Activated B cell treated with CpG ODN at 0.5 μM for 24 hours (primary cell): ENCODE measurements at regions of chr2 and their contacts with region 1.

Region 1: DNA sequence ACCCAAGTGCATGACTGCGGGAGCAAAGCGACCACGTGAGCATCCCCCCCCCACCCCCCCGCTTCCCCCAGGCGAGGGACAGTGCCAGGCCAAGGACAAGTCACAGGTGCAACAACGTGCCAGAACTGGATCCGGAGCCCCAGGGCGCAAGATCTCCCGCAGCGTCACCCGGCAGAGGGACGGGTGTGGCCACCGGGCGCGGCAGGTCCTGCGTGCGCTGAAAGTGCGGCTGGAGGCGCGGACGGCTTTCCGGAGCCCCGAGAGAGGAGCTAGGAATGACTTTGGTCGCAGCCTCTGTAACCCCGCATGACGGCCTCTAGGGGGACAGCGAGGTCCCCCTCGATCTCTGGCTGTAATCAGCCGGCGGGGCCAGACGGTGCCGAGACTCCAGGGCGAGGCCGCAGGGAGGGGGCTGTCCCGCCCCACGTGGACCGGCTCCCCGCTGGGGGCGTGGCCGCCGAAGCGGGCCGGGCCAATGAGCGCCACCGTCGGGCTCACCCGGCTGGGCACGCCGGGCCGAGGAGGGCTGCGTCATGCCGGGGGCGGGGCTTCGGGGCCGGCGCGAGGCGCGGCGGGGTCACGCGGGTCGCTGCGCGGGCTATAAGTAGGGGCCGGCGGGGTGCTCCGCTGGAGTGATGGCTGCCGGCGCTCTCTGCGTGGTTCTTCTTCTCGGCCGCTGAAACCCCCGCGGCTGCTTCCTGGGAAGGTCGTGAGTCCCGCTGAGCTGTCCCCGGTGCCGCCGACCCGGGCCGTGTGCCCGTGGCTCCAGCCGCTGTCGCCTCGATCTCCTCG is at the start of gene SLC20A1:
- DNase-seq: peak; percentile 100
- ATAC-seq: peak; percentile 93
- H3K4me3 Mint-ChIP-seq: peak within 1 kb of the TSS; percentile 89
- H3K27ac Mint-ChIP-seq: peak within 1 kb of the TSS; percentile 88
- H3K4me1 Mint-ChIP-seq: peaks cover 36% of the 10 kb centered on the region
- H3K27me3 Mint-ChIP-seq: no peaks in the 10 kb centered on the region
- CTCF ChIP-seq: no peak
- total RNA-seq, gene SLC20A1: 46.9 and 54.6 TPM in 2 replicates

Region 2: DNA sequence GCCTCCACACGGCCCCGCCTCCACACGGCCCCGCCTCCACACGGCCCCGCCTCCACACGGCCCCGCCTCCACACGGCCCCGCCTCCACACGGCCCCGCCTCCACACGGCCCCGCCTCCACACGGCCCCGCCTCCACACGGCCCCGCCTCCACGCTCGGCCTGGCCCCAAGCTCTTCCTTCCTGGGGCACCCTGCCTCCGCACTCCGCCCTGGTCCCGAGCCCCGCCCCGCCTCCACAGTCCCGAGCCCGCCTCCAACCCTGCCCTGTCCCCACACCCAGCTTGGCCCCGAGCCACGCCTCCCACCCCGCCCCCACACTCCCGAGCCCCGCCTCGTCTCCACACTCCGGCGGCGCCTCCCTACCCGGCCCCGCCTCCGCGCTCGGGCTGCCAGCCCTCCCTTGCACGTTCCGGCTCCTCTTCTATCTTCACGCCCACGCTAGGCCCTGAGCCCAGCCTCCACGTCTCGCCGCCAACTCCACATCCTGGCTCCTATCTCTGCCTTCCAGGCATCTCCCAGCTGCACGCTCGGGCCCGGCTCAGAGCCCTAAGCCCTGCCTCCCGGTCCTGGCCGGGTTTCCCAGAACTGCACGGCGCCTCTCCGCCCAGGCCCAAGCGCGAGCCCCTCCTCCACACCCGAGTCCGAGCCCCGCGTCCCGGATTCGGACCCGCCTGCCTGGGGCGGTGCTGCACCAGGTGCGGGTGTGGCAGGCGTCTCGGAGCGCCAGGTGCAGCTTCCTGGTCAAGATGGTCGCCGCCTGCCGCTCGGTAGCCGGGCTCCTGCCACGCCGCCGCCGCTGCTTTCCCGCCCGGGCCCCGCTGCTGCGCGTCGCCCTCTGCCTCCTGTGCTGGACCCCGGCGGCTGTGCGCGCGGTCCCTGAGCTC is 590.4 kb before region 1 on chr2 and contains the start of gene TMEM87B:
- CTCF ChIA-PET with region 1: no interaction called
- POLR2A ChIA-PET with region 1: no interaction called
- intact Hi-C with region 1: loop called (anchors 1 kb)
- DNase-seq: peak; percentile 87
- ATAC-seq: peak; percentile 72
- H3K4me3 Mint-ChIP-seq: peak within 1 kb of the TSS; percentile 96
- H3K27ac Mint-ChIP-seq: peak within 1 kb of the TSS; percentile 97
- H3K4me1 Mint-ChIP-seq: peaks cover 39% of the 10 kb centered on the region
- H3K27me3 Mint-ChIP-seq: no peaks in the 10 kb centered on the region
- CTCF ChIP-seq: no peak
- total RNA-seq, gene TMEM87B: 19.8 and 20.0 TPM in 2 replicates

Region 3: GRCh38 chr2:112481050-112481527 is 164.4 kb before region 1 on chr2:
- CTCF ChIA-PET with region 1: no interaction called
- POLR2A ChIA-PET with region 1: no interaction called
- intact Hi-C with region 1: loop called (anchors 5 kb)
- DNase-seq: peak; percentile 71
- ATAC-seq: peak; percentile 73
- H3K4me3 Mint-ChIP-seq: peak overlapping the region; percentile 98
- H3K27ac Mint-ChIP-seq: peak overlapping the region; percentile 97
- H3K4me1 Mint-ChIP-seq: peaks cover 22% of the 10 kb centered on the region
- H3K27me3 Mint-ChIP-seq: no peaks in the 10 kb centered on the region
- CTCF ChIP-seq: no peak

Region 4: GRCh38 chr2:112584134-112584890 is 61.2 kb before region 1 on chr2 and contains the start of gene CHCHD5:
- CTCF ChIA-PET with region 1: no interaction called
- POLR2A ChIA-PET with region 1: interaction called, 16 read pairs
- intact Hi-C with region 1: loop called (anchors 5 kb)
- DNase-seq: peak; percentile 84
- ATAC-seq: peak; percentile 85
- H3K4me3 Mint-ChIP-seq: peak within 1 kb of the TSS; percentile 96
- H3K27ac Mint-ChIP-seq: peak within 1 kb of the TSS; percentile 96
- H3K4me1 Mint-ChIP-seq: peaks cover 35% of the 10 kb centered on the region
- H3K27me3 Mint-ChIP-seq: no peaks in the 10 kb centered on the region
- CTCF ChIP-seq: no peak
- total RNA-seq, gene CHCHD5: 26.0 and 28.4 TPM in 2 replicates

Region 5: DNA sequence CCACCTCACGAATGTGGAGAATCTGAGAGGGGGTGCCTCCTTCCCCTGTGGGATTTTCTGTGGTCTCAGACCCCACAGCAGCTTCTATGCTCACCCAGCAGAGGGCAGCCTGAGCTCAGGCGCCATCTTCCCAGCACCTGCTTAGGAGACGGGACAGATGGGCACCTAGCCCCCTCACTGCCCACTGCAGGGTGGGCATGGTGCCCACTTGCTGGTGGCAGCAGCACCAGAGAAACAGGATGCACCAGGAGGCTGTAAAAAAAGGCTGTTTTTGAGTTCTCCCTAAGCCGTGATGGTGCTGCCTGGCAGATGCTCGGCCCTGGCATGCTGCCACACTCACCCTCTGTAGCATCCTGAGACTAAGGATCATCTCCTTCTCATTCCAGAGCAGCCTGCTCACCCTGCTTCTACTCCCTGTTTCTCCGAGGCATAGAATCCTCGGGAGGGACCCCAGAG is 18.9 kb before region 1 on chr2:
- CTCF ChIA-PET with region 1: interaction called, 34 read pairs
- POLR2A ChIA-PET with region 1: interaction called, 42 read pairs
- intact Hi-C with region 1: loop called (anchors 1 kb)
- DNase-seq: peak; percentile 55
- ATAC-seq: peak; percentile 85
- H3K4me3 Mint-ChIP-seq: peak overlapping the region; percentile 44
- H3K27ac Mint-ChIP-seq: no peak overlapping the region
- H3K4me1 Mint-ChIP-seq: peaks cover 30% of the 10 kb centered on the region
- H3K27me3 Mint-ChIP-seq: no peaks in the 10 kb centered on the region
- CTCF ChIP-seq: peak; percentile 25

Region 6: GRCh38 chr2:112701052-112701451 is 55.5 kb after region 1 on chr2:
- CTCF ChIA-PET with region 1: interaction called, 10 read pairs
- POLR2A ChIA-PET with region 1: interaction called, 57 read pairs
- intact Hi-C with region 1: no loop called
- DNase-seq: no peak
- ATAC-seq: peak; percentile 27
- H3K4me3 Mint-ChIP-seq: peak overlapping the region; percentile 0
- H3K27ac Mint-ChIP-seq: peak overlapping the region; percentile 83
- H3K4me1 Mint-ChIP-seq: peaks cover 65% of the 10 kb centered on the region
- H3K27me3 Mint-ChIP-seq: no peaks in the 10 kb centered on the region
- CTCF ChIP-seq: no peak

Region 7: DNA sequence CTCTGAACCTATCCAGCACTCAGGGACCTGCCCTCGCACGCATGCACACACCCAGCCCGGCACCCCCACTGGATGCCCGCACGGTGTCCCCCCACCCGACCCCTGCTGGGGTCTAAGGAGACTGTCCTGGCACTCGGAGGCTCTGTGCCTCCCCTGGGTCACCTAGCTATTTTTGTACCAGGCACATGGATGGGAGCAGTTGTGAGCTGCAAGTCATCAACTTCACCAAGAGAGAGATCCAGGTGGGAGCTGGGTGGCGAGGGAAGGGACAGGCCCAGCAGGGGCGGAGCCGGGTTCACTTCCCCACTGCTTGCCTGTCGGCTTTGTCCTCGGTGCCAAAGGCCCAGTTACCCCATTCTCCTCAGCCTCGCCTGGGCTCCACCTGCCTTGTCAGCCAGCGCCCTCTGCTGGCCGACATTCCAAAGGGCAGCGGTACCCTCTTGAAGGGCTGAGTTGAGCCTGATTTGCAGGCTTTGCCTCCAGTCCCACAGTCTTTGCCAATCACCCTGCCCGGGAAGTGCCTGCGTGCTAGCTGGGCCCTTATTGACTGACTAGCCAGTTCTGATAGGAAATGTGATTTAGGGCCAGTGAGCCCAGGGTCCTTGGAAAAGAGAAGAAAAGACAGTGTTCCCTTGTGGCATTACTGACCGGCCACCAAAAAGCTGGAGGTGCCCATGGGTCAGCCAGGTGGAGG is 81.1 kb after region 1 on chr2:
- CTCF ChIA-PET with region 1: interaction called, 43 read pairs
- POLR2A ChIA-PET with region 1: interaction called, 24 read pairs
- intact Hi-C with region 1: loop called (anchors 1 kb)
- DNase-seq: peak; percentile 83
- ATAC-seq: peak; percentile 91
- H3K4me3 Mint-ChIP-seq: peak overlapping the region; percentile 32
- H3K27ac Mint-ChIP-seq: peak overlapping the region; percentile 66
- H3K4me1 Mint-ChIP-seq: peaks cover 20% of the 10 kb centered on the region
- H3K27me3 Mint-ChIP-seq: no peaks in the 10 kb centered on the region
- CTCF ChIP-seq: peak; percentile 75